Activated CD8-positive, alpha-beta T cell treated with anti-CD3 and anti-CD28 coated beads for 36 hours (primary cell): ENCODE measurements at regions of chr4 and their contacts with region 1.

Region 1: DNA sequence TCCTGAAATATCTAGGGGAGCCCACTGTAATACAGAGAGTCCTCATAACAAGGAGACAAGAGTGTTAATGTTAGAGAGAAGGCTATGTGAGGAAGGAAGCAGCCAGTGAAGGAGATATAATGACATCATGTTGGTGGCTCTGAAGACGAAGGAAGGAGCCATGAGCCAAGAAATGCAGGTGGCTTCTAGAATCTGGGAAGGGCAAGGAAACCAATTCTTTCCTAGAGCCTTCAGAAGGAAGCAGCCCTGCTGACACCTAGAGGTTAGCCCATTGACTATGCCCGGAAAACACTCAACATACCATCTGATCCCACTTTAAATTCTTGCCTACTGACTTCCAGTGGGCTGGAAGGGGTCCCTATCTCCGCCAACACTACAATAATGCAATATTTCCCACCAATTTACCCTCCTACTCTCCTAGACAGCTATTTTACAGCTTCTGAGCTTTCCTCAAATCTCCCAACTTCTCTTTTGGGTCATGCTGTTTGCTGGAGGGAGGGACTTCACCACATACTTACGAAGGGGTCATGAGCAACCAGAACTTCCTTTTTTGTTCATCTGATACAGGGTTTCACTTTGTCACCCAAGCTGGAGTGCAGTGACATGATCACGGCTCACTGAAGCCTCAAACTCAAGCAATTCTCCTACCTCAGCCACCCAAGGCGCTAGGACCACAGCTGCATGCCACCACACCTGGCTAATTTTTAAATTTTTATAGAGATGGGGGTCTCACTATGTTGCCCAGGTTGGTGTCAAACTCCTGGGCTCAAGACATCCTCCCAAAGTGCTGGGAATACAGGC is 25.2 kb upstream of the G3BP2 start:
- DNase-seq: peak; percentile 62
- ATAC-seq: peak; percentile 75
- H3K4me3 Mint-ChIP-seq: peak overlapping the region; percentile 14
- H3K27ac Mint-ChIP-seq: peak overlapping the region; percentile 89
- H3K4me1 Mint-ChIP-seq: peaks cover 41% of the 10 kb centered on the region
- H3K27me3 Mint-ChIP-seq: no peaks in the 10 kb centered on the region
- CTCF ChIP-seq: no peak

Region 2: GRCh38 chr4:75653845-75654503 is 44.4 kb before region 1 on chr4:
- CTCF ChIA-PET with region 1: interaction called, 3 read pairs
- POLR2A ChIA-PET with region 1: interaction called, 7 read pairs
- intact Hi-C with region 1: loop called (anchors 5 kb)
- DNase-seq: no peak
- ATAC-seq: peak; percentile 11
- H3K4me3 Mint-ChIP-seq: peak overlapping the region; percentile 50
- H3K27ac Mint-ChIP-seq: peak overlapping the region; percentile 96
- H3K4me1 Mint-ChIP-seq: peaks cover 59% of the 10 kb centered on the region
- H3K27me3 Mint-ChIP-seq: no peaks in the 10 kb centered on the region
- CTCF ChIP-seq: peak; percentile 20